ENCODE measurements at regions of chr5 and their contacts with region 1.

Region 1: DNA sequence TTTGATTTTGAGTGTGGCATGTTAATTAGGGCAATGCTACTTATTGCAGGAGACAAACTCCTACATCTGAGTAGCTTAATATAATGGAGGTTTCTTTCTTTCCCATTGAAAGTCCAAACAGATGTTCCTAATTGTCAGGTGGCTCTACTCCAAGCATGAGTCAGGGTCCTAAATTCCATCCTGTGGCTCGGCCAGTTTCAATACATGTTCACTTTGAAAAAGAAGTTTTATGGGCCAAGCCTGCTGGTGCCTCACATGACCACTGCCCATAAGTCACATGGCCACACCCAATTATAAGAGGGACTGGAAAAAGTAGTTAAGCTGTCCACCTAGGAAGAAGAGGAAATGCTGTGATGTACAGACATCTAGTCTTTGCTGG is 170.4 kb downstream of the ARRDC3 start:
- DNase-seq: peak; percentile 81
- H3K4me3 ChIP-seq: no peak overlapping the region
- H3K27ac ChIP-seq: peak overlapping the region; percentile 80
- H3K27me3 ChIP-seq: no peaks in the 10 kb centered on the region
- CTCF ChIP-seq: no peak

Region 2: DNA sequence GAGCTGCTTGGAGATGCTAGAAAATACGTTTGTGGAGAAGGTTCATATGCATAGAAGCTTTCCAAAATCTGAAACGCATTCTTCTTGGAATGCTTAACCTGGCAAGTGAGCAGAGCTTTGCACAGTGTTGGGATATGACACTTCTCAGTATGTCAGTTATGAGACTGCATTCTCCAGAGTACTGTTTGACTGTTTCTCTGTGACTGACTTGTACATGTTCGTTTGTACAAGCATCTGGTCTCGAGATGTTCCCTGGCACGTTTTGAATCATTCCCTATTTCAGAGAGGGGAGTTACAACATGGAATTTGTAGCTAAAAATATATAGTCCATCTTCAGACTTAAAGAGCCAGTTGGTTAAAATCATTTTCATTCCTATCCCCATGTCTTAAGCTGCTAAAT is 102.0 kb before region 1 on chr5:
- CTCF ChIA-PET with region 1: no interaction called
- POLR2A ChIA-PET with region 1: no interaction called
- DNase-seq: no peak
- H3K4me3 ChIP-seq: no peak overlapping the region
- H3K27ac ChIP-seq: no peak overlapping the region
- H3K27me3 ChIP-seq: no peaks in the 10 kb centered on the region
- CTCF ChIP-seq: no peak

Region 3: GRCh38 chr5:91178461-91178860 is 34.2 kb before region 1 on chr5:
- CTCF ChIA-PET with region 1: no interaction called
- POLR2A ChIA-PET with region 1: interaction called, 10 read pairs
- DNase-seq: no peak
- H3K4me3 ChIP-seq: no peak overlapping the region
- H3K27ac ChIP-seq: no peak overlapping the region
- H3K27me3 ChIP-seq: no peaks in the 10 kb centered on the region
- CTCF ChIP-seq: no peak

Region 4: GRCh38 chr5:91225848-91226686 is 13.4 kb after region 1 on chr5:
- CTCF ChIA-PET with region 1: no interaction called
- POLR2A ChIA-PET with region 1: no interaction called
- DNase-seq: no peak
- H3K4me3 ChIP-seq: no peak overlapping the region
- H3K27ac ChIP-seq: no peak overlapping the region
- H3K27me3 ChIP-seq: no peaks in the 10 kb centered on the region
- CTCF ChIP-seq: peak; percentile 25; the same call in 1 of the 2 replicates

Region 5: DNA sequence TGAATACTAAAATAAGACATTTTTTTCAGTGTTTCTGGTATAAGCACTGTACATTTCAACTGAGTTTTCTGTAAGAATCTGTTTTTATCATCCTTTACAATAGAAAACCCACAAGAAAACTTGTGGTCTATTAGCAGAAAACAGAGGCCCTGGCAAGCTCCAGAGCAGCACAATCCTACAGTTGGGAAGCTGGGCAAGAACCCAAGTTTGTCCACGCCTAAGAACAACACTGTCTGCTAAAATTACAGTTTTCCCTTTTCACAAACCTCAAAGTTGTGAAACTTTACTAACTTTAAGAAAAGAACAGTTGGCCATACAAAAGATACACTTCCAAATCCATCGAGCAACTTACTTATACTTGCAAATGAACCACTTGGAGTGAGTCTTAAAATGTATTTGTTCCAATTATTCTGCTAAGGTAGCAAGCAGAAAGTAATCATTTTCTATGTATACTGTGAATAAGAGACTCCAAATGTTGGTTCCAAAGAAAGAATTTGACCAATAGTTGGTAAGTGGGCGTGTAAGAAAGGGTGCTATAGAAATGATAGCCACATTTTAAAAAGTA is 1152.4 kb after region 1 on chr5:
- CTCF ChIA-PET with region 1: no interaction called
- POLR2A ChIA-PET with region 1: no interaction called
- DNase-seq: no peak
- H3K4me3 ChIP-seq: no peak overlapping the region
- H3K27ac ChIP-seq: no peak overlapping the region
- H3K27me3 ChIP-seq: no peaks in the 10 kb centered on the region
- CTCF ChIP-seq: no peak

Measured in AG04450 (cell line).